H1 (cell line): ENCODE measurements at regions of chr22 and their contacts with region 1.

Region 1: GRCh38 chr22:45298934-45299505 is 10.7 kb upstream of the FAM118A start:
- DNase-seq: no peak
- H3K4me3 ChIP-seq: no peak overlapping the region
- H3K27ac ChIP-seq: no peak overlapping the region
- H3K4me1 ChIP-seq: peaks cover 0 to 10% (median 2%) of the 10 kb centered on the region in 4 experiments; a peak in 2 of 7 replicates
- H3K27me3 ChIP-seq: no peaks in the 10 kb centered on the region; a peak in 1 of 7 replicates
- CTCF ChIP-seq: no peak
- EP300 ChIP-seq: no peak
- POLR2A ChIP-seq: no peak
- RAD21 ChIP-seq: no peak

Region 2: GRCh38 chr22:45309472-45310227 is 10.6 kb after region 1 on chr22 and contains the start of gene FAM118A:
- CTCF ChIA-PET with region 1: interaction called, 14 read pairs
- POLR2A ChIA-PET with region 1: interaction called, 13 read pairs
- DNase-seq: peak; percentile 83 to 100
- H3K4me3 ChIP-seq: peak within 1 kb of the TSS; percentile 63 to 88 (median 68)
- H3K27ac ChIP-seq: peak within 1 kb of the TSS; percentile 54; the same call in 1 of the 2 replicates
- H3K4me1 ChIP-seq: peaks cover 0 to 10% (median 7%) of the 10 kb centered on the region in 4 experiments; a peak in 5 of 7 replicates
- H3K27me3 ChIP-seq: peaks cover 0 to 4% (median 0%) of the 10 kb centered on the region in 4 experiments; a peak in 2 of 7 replicates
- CTCF ChIP-seq: no peak; a peak in 1 of 4 replicates
- EP300 ChIP-seq: peak in 1 of 2 experiments; percentile 62; a peak in 1 of 3 replicates
- POLR2A ChIP-seq: peak; percentile 72 to 81
- RAD21 ChIP-seq: peak in 1 of 2 experiments; percentile 0; a peak in 1 of 4 replicates
- total RNA-seq, gene FAM118A: 18.6 and 21.1 TPM in 2 replicates